Heart left ventricle (tissue), 16 donors: ENCODE measurements at regions of chr19 and their contacts with region 1.

Region 1: DNA sequence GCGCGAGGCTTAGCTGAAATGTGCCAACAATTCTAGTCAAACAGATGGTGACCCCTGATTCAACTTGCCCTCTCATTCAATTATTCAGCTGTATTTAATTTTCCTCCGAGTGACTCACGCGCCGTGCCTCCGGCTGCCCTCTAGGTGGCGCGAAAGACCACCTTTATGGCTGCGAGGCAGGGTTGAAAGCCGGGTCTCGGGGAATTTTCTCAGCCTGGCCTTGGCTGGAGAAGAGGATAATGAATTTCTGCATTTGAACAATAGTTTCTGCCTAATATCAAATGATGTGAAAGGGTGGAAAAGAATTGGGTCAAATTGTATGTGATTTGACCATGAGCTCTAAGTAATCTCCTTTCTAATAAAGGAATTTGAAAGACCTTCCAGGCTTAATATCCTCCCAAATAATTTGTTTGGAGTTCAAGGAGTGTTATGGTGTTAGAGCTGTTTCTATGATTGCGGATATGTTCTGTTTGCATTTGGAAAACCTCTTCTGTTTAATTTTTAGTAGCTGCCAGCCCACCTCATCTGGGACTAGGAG is 310.9 kb downstream of the ZNF536 start:
- DNase-seq: peak; percentile 63 to 80 (median 71)
- ATAC-seq: peak in 3 of 4 donors; percentile 68 to 88 (median 82)
- H3K4me3 ChIP-seq: no peak overlapping the region
- H3K27ac ChIP-seq: no peak overlapping the region
- H3K4me1 ChIP-seq: peaks cover 0 to 4% (median 0%) of the 10 kb centered on the region in 12 donors
- H3K27me3 ChIP-seq: peaks cover 0 to 32% (median 10%) of the 10 kb centered on the region in 9 donors
- CTCF ChIP-seq: peak; percentile 85 to 96 (median 90)
- POLR2A ChIP-seq: no peak

Region 2: DNA sequence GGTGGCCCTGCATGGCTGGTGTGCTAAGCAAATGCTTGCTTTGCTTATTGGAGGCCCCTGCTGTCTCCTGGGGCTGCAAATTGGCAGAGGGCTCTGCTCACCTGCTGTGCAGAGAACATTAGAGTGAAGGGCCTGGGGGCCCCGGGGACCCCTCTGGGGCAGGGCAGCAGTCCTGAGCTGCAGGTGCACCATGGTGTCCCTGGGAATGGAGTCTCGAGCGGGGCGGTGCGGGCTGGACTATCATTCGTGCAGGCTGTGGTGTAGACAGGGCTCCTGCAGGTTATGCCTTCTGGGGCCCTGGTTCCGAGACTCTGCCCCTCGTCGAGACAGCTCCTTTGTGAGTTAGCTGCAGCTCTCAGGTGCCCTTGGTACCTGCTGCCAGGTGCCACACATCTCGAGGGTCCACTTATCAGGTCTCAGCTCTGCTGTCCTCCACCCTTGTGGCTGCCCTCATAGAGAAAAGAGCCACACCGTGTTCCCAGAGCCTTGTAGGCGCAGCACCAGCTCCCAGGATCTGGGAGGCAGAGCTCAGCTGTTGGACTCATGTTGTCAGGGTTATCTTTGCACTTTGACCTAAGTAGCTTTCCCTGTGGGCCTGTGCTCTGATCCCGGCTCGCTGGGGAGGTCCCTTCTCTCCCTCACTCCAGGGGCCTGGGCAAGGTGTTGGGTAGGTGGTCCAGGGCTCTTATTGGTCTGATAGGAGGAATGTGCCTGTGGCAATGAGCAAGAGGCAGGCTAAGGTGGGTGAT is 368.8 kb before region 1 on chr19:
- intact Hi-C with region 1: no loop called
- DNase-seq: no peak
- ATAC-seq: no peak
- H3K4me3 ChIP-seq: no peak overlapping the region
- H3K27ac ChIP-seq: no peak overlapping the region
- H3K4me1 ChIP-seq: no peaks in the 10 kb centered on the region
- H3K27me3 ChIP-seq: peaks cover 0 to 5% (median 0%) of the 10 kb centered on the region in 9 donors
- CTCF ChIP-seq: no peak
- POLR2A ChIP-seq: no peak

Region 3: GRCh38 chr19:30774252-30774766 is 91.2 kb after region 1 on chr19:
- intact Hi-C with region 1: no loop called
- DNase-seq: no peak
- ATAC-seq: no peak
- H3K4me3 ChIP-seq: no peak overlapping the region
- H3K27ac ChIP-seq: no peak overlapping the region
- H3K4me1 ChIP-seq: no peaks in the 10 kb centered on the region
- H3K27me3 ChIP-seq: peaks cover 0 to 13% (median 3%) of the 10 kb centered on the region in 9 donors
- CTCF ChIP-seq: no peak
- POLR2A ChIP-seq: no peak

Region 4: GRCh38 chr19:31349160-31349881 is 666.3 kb after region 1 on chr19 and contains the start of gene TSHZ3:
- intact Hi-C with region 1: loop called in 2 of 10 experiments (anchors 10 kb)
- DNase-seq: peak; percentile 81 to 90 (median 86)
- ATAC-seq: peak; percentile 69 to 86 (median 80)
- H3K4me3 ChIP-seq: peak within 1 kb of the TSS; percentile 75 to 96 (median 86)
- H3K27ac ChIP-seq: peak within 1 kb of the TSS; percentile 79 to 97 (median 93)
- H3K4me1 ChIP-seq: peaks cover 0 to 47% (median 15%) of the 10 kb centered on the region in 12 donors
- H3K27me3 ChIP-seq: peaks cover 0 to 36% (median 17%) of the 10 kb centered on the region in 9 donors
- CTCF ChIP-seq: no peak
- POLR2A ChIP-seq: no peak
- total RNA-seq, gene TSHZ3: 2.0 to 11.5 (median 2.7) TPM

Region 5: DNA sequence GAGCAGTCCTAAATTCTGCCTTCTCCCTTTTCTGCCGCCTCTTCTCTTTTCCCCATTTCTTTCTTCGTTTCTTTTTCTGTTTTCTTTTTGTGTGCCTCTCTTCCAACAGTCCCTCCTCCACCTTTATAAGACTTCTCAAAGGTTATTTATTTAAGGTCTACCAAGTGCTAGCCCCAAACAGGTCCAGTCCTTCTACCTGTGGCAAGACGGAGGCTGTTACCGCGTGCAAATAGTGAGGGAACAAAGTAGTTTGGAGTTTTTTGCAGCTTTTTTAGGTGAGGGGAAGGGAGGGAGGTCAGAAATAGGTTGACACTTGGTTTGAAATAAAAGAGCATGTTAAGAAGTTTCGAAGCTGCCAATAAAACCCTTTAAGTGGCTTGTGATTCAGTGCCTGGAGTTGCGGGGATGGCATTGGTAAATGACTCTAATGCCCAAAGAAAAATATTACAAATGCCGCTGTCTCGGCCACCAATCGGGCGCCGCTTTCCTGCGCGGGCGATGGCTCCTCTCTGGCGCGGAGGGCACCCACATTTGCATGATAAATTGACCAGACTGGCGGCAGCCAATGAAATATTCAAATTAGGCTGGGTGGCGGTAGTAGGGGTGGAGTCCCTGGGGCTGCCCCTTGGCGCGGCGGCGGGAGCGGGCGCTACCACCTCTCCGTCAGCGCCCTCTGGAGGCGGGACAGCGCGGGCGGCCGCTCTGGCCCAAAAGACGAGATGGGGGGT is 673.7 kb after region 1 on chr19:
- intact Hi-C with region 1: loop called in 4 of 10 experiments (anchors 5 to 10 kb)
- DNase-seq: peak in 3 of 5 donors; percentile 40 to 79 (median 50)
- ATAC-seq: peak in 3 of 4 donors; percentile 49 to 59 (median 52)
- H3K4me3 ChIP-seq: peak overlapping the region in 2 of 12 donors; percentile 20 to 25
- H3K27ac ChIP-seq: no peak overlapping the region
- H3K4me1 ChIP-seq: peaks cover 0 to 47% (median 6%) of the 10 kb centered on the region in 12 donors
- H3K27me3 ChIP-seq: peaks cover 5 to 73% (median 45%) of the 10 kb centered on the region in 9 donors
- CTCF ChIP-seq: peak; percentile 30 to 60 (median 50)
- POLR2A ChIP-seq: no peak

Region 6: GRCh38 chr19:31548941-31549340 is 865.9 kb after region 1 on chr19:
- intact Hi-C with region 1: loop called in 8 of 10 experiments (anchors 2 to 10 kb)
- DNase-seq: no peak
- ATAC-seq: peak in 1 of 4 donors; percentile 34
- H3K4me3 ChIP-seq: no peak overlapping the region
- H3K27ac ChIP-seq: no peak overlapping the region
- H3K4me1 ChIP-seq: no peaks in the 10 kb centered on the region
- H3K27me3 ChIP-seq: peaks cover 0 to 7% (median 0%) of the 10 kb centered on the region in 9 donors
- CTCF ChIP-seq: peak; percentile 31 to 60 (median 42)
- POLR2A ChIP-seq: no peak

Region 7: GRCh38 chr19:32041681-32042292 is 1358.7 kb after region 1 on chr19:
- intact Hi-C with region 1: loop called in 8 of 10 experiments (anchors 5 to 10 kb)
- DNase-seq: peak in 4 of 5 donors; percentile 23 to 47 (median 34)
- ATAC-seq: peak in 1 of 4 donors; percentile 34
- H3K4me3 ChIP-seq: peak overlapping the region in 10 of 12 donors; percentile 12 to 54 (median 38)
- H3K27ac ChIP-seq: no peak overlapping the region
- H3K4me1 ChIP-seq: peaks cover 0 to 6% (median 0%) of the 10 kb centered on the region in 12 donors
- H3K27me3 ChIP-seq: peaks cover 0 to 58% (median 7%) of the 10 kb centered on the region in 9 donors
- CTCF ChIP-seq: peak; percentile 48 to 89 (median 70)
- POLR2A ChIP-seq: no peak

Region 8: DNA sequence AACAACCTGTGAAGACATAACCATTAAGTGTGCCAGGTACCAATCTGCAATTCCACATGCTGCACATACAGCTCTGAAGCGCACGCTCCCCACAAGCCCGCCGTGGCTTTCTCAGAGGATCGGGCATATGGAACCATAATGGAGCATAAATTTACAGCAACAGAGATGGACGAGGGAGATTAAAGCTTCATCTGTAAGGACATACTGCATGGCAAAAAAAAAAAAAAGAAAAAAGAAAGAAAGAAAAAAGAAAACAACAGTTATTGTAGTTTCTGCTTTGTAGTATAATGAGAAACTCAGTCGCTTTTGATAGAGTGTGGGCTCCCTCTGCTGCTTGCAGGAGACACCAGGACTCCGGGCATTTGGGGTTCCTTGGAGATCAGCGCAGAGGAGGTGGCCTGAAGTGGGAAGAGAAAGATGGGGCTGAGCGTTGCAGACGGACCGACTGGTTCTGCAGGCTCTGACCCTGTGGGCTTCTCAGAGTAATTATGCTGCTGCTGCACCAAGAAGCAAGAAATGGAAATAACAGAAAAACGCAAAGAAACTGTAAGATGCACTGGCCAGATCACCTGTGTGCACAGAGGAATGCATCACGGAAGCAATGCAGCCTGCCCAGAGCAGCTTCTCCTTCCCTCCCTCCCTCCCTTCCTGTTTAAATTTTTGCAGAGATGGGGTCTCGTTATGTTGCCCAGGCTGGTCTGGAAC is 1887.2 kb after region 1 on chr19:
- intact Hi-C with region 1: loop called in 2 of 10 experiments (anchors 5 to 10 kb)
- DNase-seq: peak in 4 of 5 donors; percentile 19 to 46 (median 34)
- ATAC-seq: peak in 3 of 4 donors; percentile 76 to 80 (median 79)
- H3K4me3 ChIP-seq: no peak overlapping the region
- H3K27ac ChIP-seq: no peak overlapping the region
- H3K4me1 ChIP-seq: no peaks in the 10 kb centered on the region
- H3K27me3 ChIP-seq: peaks cover 0 to 40% (median 4%) of the 10 kb centered on the region in 9 donors
- CTCF ChIP-seq: peak; percentile 29 to 69 (median 63)
- POLR2A ChIP-seq: no peak